AG04450 (cell line): ENCODE measurements at regions of chrX and their contacts with region 1.

Region 1: DNA sequence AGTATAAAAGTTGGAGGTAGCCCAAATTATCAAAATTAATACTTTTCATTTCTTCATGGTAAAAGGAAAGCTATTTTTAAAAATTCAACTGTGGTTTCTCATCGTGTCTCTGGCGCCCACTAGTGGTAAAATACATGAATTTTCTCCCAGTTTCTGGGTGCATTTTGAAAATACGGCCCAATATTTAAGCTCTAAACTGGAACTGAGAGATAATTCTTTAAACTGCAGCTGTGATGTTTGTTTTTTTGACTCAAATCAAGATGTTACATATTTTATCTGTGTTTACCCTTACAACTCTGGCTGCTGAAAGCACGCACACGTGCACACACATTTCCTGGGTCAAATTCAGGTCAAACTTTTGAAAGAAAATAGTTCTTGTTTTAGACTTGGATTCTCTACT is 123.9 kb upstream of the ACSL4 start:
- DNase-seq: no peak
- H3K4me3 ChIP-seq: no peak overlapping the region
- H3K27ac ChIP-seq: peak overlapping the region; percentile 49
- H3K27me3 ChIP-seq: no peaks in the 10 kb centered on the region
- CTCF ChIP-seq: peak; percentile 70

Region 2: DNA sequence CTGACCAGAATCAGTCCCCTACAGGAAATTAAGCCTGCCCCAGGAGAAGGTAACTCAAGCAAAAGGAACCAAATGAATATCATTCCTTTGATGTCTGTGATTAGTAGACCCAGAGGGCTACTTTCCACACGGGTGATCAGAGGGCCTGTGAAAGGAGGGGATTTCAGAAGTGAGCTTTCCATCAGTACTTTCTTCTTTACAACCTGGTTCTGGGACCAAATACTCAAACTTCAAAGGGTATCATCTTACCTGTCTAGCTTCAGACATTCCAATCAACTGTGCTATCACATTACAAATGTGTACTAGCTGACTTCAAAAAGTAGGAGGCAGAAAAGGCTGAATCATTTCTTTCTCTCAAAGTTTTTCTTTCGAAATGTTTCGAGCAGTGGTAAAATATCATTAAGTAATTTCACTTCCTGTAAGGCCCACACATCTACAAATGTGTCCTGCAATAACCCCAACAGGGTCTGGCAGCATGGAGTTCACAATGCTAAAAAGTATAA is 147.8 kb before region 1 on chrX:
- CTCF ChIA-PET with region 1: interaction called, 111 read pairs
- POLR2A ChIA-PET with region 1: no interaction called
- DNase-seq: no peak
- H3K4me3 ChIP-seq: no peak overlapping the region
- H3K27ac ChIP-seq: peak overlapping the region; percentile 39
- H3K27me3 ChIP-seq: no peaks in the 10 kb centered on the region
- CTCF ChIP-seq: 0 out of 2 replicates have a peak, but pooled peaks have one; percentile 7

Region 3: DNA sequence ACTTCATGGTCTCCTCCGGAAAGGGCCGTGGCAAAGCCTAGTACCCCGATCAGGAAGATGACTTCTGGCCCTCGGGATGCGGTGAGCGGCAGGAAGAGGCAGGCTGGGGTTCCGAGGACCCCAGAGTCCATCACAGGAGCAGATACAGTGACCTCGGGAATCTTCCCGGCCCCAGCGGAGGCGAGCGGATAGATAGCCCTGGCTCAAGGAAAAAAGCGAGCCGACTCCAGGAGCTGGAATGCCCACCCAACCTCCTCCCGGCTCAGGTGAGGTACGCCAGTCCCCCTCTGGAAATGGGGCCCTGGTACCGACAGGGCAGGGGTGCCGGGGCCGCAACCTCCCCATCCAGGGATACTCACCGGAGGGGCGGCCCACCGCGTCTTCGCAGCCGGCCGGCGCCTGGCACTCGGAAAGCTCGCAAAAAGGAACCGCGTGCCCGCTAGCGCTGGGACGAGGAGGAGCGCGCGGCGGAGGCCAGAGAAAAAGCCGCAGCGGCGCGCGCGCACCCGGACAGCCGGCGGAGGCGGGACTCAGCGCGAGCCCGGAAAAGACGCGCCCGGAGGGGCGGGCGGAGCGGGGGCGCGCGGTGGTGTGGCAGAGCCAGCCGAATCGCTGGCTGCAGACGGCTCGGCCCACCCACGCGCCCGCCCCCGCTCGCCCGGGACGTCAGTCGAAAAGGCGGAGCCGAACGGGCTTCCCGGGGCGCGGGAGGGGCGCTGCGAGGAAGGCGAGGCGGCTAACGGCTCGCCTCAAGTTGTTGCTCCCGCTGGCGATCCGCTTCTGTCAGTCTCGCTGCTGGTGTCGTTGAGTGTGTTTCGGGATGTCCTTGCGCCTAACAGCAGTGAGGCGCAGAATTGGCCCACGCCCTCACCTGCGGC is 124.0 kb before region 1 on chrX and contains the start of gene ACSL4:
- CTCF ChIA-PET with region 1: interaction called, 12 read pairs
- POLR2A ChIA-PET with region 1: no interaction called
- DNase-seq: no peak
- H3K4me3 ChIP-seq: peak within 1 kb of the TSS; percentile 81
- H3K27ac ChIP-seq: peak within 1 kb of the TSS; percentile 91
- H3K27me3 ChIP-seq: no peaks in the 10 kb centered on the region
- CTCF ChIP-seq: no peak
- polyA plus RNA-seq, gene ACSL4: 124 and 157 TPM in 2 replicates

Region 4: GRCh38 chrX:109830704-109831206 is 26.2 kb before region 1 on chrX:
- CTCF ChIA-PET with region 1: interaction called, 11 read pairs
- POLR2A ChIA-PET with region 1: interaction called, 11 read pairs
- DNase-seq: peak; percentile 34
- H3K4me3 ChIP-seq: no peak overlapping the region
- H3K27ac ChIP-seq: peak overlapping the region; percentile 31
- H3K27me3 ChIP-seq: no peaks in the 10 kb centered on the region
- CTCF ChIP-seq: no peak

Region 5: DNA sequence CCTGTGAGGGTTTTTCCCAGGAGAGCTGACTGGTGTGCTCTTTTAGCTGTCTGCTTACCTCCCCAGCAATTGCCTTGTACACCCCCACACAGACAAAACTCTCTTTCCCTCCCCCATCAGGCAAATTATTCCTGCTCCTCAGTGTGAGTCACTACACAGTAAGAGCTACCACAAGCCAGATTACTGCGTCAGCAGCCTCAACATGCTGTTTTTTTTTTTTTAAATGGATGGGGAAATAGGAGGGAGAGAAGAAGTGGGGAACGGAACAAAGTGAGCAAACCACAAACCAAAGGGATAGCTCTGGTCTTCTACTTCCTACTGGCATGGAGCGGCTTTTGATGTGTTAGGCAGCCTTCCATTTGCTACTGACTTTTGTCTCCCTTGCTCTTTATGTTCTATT is 16.4 kb before region 1 on chrX:
- CTCF ChIA-PET with region 1: interaction called, 18 read pairs
- POLR2A ChIA-PET with region 1: no interaction called
- DNase-seq: peak; percentile 81
- H3K4me3 ChIP-seq: no peak overlapping the region
- H3K27ac ChIP-seq: peak overlapping the region; percentile 88
- H3K27me3 ChIP-seq: no peaks in the 10 kb centered on the region
- CTCF ChIP-seq: no peak

Region 6: DNA sequence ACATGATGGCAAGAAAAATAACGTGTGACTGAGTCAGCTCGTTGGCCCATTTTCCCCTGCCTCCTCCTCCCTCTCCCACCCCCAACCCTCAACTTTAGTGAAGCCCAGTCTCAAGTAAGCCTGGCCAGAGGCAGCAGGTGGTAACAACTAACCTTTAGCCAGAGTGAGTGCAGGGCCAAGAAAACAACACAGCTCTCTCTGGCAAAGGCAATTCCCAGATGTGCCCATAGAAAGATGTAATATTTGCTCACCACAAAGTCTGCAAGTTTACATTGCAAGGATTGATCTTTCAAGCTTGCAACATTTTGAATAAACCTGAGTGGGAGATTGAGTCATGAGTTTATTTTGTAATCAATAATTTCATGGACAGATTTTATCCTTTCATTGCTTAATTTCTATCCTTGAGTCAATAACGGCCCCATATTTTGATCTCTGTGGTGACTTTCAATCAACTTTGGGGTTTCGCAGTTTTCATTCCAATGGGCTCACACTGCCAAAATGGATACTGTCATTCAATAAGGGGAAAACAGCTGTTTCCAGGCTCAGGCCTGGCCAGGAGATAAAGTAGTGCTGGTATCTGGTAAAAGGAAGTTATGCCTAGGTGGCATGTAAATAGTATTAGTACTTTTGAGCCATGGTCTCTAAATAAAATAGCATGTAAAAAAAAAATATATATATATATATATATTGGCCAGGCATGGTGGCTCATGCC is 15.2 kb after region 1 on chrX:
- CTCF ChIA-PET with region 1: interaction called, 27 read pairs
- POLR2A ChIA-PET with region 1: no interaction called
- DNase-seq: peak; percentile 90
- H3K4me3 ChIP-seq: no peak overlapping the region
- H3K27ac ChIP-seq: peak overlapping the region; percentile 11
- H3K27me3 ChIP-seq: no peaks in the 10 kb centered on the region
- CTCF ChIP-seq: no peak

Region 7: GRCh38 chrX:110383414-110383813 is 526.4 kb after region 1 on chrX:
- CTCF ChIA-PET with region 1: no interaction called
- POLR2A ChIA-PET with region 1: no interaction called
- DNase-seq: peak; percentile 59
- H3K4me3 ChIP-seq: no peak overlapping the region
- H3K27ac ChIP-seq: peak overlapping the region; percentile 83
- H3K27me3 ChIP-seq: no peaks in the 10 kb centered on the region
- CTCF ChIP-seq: no peak